Activated CD8-positive, alpha-beta memory T cell treated with anti-CD3 and anti-CD28 coated beads, Interleukin-2, amount 10 ng/mL, durations not matched to agents 7 days and 5 days (primary cell): ENCODE measurements at regions of chr2 and their contacts with region 1.

Region 1: GRCh38 chr2:230643576-230644291 is 68.9 kb upstream of the CAB39 start:
- DNase-seq: peak; percentile 73
- ATAC-seq: peak; percentile 95
- H3K4me3 Mint-ChIP-seq: peak overlapping the region; percentile 51
- H3K27ac Mint-ChIP-seq: peak overlapping the region; percentile 90
- H3K4me1 Mint-ChIP-seq: peaks cover 23% of the 10 kb centered on the region
- H3K27me3 Mint-ChIP-seq: no peaks in the 10 kb centered on the region

Region 2: GRCh38 chr2:230658877-230659652 is 15.3 kb after region 1 on chr2:
- CTCF ChIA-PET with region 1: interaction called, 60 read pairs
- DNase-seq: peak; percentile 94
- ATAC-seq: peak; percentile 63
- H3K4me3 Mint-ChIP-seq: peak overlapping the region; percentile 85
- H3K27ac Mint-ChIP-seq: peak overlapping the region; percentile 99
- H3K4me1 Mint-ChIP-seq: peaks cover 97% of the 10 kb centered on the region
- H3K27me3 Mint-ChIP-seq: no peaks in the 10 kb centered on the region